Panc1 (cell line): ENCODE measurements at regions of chr22 and their contacts with region 1.

Region 1: DNA sequence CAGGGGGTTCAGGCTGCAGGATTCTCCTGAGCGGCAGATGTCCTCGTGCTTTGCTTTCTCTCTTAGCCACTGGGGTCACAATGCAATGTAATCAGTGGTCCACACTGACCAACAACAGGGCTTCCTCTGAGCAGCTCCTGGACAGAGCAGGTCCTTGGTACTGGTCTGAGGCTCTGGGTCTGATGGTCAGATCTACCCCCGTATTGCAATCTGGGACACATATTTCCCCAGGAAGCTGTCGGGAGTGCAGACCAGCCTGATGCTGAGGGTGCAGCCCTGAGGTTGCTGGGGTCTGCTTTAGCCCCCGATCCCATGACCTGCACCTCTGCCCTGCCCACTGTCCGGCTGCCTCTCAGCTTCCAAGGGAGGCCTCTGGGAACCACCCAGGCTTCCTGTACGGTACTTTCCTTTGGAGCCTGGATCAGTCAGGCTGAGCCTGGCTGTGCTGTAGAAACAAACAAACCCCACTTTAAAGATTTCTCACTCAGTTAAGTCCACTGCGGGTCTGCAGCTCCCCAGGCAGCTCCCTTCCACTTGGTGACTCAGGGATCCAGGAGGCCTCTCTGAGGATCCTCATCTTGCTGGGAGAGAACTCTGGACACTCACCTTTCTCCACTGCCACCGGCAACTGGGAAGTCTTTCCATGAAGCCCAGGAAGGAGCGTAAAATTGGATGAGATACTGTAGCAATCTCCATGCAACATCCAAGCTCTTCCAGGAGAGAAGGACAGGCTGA is 1046.6 kb downstream of the TBC1D22A start:
- DNase-seq: no peak
- ATAC-seq: no peak
- H3K4me3 ChIP-seq: no peak overlapping the region
- H3K27ac ChIP-seq: no peak overlapping the region
- H3K4me1 ChIP-seq: no peaks in the 10 kb centered on the region
- H3K27me3 ChIP-seq: no peaks in the 10 kb centered on the region
- CTCF ChIP-seq: no peak

Region 2: GRCh38 chr22:47822422-47822821 is 13.4 kb after region 1 on chr22:
- CTCF ChIA-PET with region 1: no interaction called
- POLR2A ChIA-PET with region 1: no interaction called
- in situ Hi-C with region 1: no loop called
- intact Hi-C with region 1: no loop called
- DNase-seq: no peak
- ATAC-seq: no peak
- H3K4me3 ChIP-seq: no peak overlapping the region
- H3K27ac ChIP-seq: no peak overlapping the region
- H3K4me1 ChIP-seq: no peaks in the 10 kb centered on the region
- H3K27me3 ChIP-seq: no peaks in the 10 kb centered on the region
- CTCF ChIP-seq: no peak

Region 3: GRCh38 chr22:47849576-47849975 is 40.5 kb after region 1 on chr22:
- CTCF ChIA-PET with region 1: no interaction called
- POLR2A ChIA-PET with region 1: interaction called, 17 read pairs
- in situ Hi-C with region 1: no loop called
- intact Hi-C with region 1: no loop called
- DNase-seq: no peak
- ATAC-seq: no peak
- H3K4me3 ChIP-seq: no peak overlapping the region
- H3K27ac ChIP-seq: no peak overlapping the region
- H3K4me1 ChIP-seq: no peaks in the 10 kb centered on the region
- H3K27me3 ChIP-seq: no peaks in the 10 kb centered on the region
- CTCF ChIP-seq: no peak